Left cardiac atrium (tissue), 4 donors: ENCODE measurements at regions of chr2 and their contacts with region 1.

Region 1: DNA sequence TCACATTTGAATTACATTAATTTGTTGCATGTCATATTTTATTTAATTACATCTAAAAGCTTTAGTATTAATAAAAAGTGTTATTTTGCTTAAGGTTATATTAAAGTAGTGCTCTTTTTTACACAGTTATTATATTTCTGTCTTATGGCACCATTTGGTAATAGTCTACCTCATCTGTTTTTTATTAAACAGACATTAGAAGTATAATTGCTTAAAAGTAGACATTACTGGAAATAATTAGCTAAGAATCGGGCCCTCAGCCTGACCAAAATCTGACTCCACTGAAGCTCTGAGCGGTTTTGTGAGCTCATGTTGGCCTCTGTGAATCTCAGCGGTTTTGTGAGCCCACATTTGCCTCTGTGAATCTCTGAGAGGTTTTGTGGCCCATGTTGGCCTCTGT is 102.5 kb upstream of the SNTG2 start:
- DNase-seq: no peak
- ATAC-seq: no peak

Region 2: DNA sequence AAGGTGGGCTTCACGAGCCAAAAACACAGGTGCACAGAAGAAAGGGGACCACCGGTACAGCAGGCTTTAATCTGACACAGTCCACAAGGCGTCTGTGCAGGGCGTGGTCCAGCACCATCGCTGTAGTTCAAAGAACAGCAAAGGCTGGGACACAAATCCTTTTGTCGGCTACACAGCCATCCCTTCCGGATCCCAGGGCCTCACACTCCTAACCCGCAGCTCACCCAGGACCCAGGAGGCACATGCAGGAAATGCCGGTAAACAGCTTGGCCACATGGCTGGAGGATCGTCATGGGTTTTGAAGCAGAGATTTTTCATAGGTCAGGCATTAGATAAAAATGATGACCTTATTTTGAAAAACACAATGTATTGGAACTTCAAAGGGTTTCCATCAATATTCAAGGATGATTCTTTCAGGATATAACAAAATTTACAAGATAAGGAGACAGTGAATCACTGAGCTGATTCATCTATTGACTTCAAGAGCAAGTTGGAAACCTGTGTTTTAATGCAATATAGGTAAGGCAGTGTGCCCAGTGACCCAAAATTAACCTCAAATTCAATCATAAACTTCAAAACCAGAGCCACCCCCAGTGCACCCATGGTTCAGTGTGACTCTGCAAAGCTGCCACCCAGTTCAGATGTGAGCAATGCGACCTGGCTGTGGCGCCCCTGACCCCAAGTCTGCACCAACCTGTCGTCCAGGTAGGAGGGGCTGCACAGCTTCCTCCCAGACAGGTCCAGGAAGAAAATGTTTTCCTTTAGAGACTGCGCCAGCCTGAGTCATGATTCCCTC is 245.3 kb before region 1 on chr2:
- intact Hi-C with region 1: no loop called
- DNase-seq: no peak
- ATAC-seq: no peak

Region 3: DNA sequence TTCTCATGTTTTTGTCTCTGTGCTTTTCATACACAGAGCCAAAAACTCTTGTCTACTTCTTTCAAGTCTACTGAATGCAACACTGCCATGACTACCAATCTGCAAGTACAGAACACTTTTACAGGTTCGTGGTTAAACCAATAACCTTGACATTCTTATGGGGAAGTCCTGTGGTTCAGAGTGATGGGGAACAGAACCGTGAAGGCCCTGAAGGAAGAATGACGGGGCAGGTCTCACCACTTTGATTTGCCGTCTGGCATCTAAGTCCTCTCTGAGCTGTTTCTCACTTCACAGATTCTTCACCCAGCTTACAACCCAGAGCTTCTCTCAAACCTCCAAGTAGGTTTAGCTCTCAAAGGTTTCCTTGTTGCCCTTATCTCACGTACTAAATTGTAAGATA is 14.9 kb before region 1 on chr2:
- intact Hi-C with region 1: no loop called
- DNase-seq: no peak
- ATAC-seq: no peak

Region 4: GRCh38 chr2:883803-884748 is 36.0 kb after region 1 on chr2:
- intact Hi-C with region 1: loop called in 1 of 2 experiments (anchors 2 kb)
- DNase-seq: no peak
- ATAC-seq: no peak